ENCODE measurements at regions of chr1 and their contacts with region 1.

Region 1: DNA sequence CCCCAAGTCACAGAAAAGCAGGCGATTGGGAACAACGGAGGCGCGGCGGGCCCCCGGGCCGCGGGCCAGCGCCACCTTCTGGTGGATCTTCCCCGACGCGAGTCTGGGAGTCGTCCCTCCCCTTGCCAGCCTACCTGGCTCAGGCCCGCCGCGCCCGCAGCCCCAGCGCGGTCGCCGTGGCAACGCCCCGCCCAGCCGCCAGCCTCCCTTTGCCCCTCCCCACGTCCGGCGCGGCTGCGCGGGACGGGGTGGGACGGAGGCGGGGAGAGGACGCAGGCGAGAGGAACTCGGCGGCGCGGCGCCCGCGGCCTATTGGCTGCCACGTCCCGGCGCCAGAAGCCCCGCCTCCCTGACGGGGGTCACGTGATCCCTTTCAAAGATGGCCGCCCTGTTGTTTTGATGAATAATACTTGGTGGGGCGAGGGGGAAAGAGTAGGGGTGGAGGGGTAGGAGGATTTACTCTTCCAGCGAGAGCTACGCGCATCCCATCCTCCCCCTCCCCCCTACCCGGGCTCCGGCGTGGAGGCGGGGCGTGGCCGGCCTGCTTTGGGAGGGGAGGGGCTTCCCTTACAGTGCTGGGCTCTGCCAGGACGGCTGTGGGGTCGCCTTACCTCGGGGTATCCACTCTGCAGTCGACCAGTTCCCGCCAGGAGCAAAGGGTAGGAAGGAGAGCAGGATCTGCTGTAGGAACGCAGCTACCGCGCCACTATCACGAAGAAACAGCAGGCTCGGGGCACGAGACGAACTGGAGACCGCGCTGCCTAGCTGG is at the start of gene UBE4B:
- DNase-seq: peak; percentile 85
- H3K4me3 ChIP-seq: peak within 1 kb of the TSS; percentile 87
- H3K27me3 ChIP-seq: no peaks in the 10 kb centered on the region
- CTCF ChIP-seq: peak; percentile 84
- polyA plus RNA-seq, gene UBE4B: 18.2 and 19.4 TPM in 2 replicates

Region 2: DNA sequence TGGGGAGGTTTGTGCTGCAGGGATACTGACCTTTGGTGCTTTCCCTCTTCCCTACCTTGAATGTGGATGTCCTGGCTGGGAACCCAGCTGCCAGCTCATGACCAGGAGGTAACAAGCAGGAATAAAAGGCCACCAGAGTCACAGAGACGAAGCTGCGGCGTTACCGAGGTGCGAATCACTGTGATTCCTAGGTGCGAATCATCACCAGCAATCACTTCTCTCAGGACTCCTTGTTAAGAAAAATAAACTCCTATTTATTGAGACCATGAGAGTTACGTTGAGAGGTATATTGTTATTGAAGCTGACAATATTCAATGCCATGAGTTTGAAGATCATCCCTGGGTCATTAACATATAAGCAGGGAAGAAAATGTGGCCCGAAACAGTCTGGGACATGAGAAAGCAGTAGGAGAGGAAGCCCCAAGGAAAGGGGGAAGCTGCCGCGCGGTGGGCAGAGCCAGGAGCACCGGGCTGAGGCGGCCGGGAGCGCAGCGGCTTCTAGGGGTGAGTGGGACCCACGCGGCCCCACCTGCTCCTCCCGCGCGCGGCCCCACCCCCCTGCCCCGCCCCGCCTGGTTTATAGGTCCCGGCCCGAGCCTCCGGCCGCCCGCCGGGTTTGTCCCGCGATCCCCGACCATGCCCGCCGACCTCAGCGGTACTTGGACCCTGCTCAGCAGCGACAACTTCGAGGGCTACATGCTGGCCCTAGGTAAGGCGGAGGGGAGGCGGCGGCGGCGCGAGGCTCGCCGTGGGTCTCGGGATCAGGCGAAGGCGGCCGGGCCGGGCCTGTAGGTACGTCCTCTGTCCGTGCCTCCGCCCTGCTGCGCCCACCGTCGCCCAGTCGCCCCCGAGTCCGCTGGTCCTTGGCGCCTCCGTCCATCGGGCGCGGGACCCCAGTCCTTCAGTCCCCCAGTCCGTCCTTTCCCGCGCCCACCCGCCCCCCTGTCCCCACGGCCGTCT is 35.9 kb before region 1 on chr1 and contains the start of gene RBP7:
- CTCF ChIA-PET with region 1: no interaction called
- POLR2A ChIA-PET with region 1: no interaction called
- DNase-seq: no peak
- H3K4me3 ChIP-seq: peak within 1 kb of the TSS; percentile 29
- H3K27me3 ChIP-seq: peaks cover 8% of the 10 kb centered on the region
- CTCF ChIP-seq: no peak
- polyA plus RNA-seq, gene RBP7: 0.42 and 0.50 TPM in 2 replicates

Region 3: DNA sequence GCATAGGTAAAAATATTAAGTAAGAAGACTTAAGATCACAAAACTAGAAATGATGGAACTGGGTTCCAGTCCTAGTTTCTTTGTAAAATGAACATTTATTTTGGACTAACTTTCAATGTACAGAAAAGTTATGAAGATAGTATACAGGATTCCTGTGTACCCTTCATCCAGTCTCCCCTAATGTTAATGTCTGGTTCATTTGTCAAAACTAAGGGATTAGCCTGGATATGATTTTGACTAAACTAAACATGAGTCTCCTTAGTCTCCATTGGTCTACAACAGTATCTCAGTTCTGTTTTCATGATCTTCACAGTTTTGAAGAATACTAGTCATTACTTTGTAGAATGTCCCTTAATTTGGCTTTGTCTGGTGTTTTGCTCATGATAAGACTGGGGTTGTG is 54.4 kb after region 1 on chr1:
- CTCF ChIA-PET with region 1: no interaction called
- POLR2A ChIA-PET with region 1: no interaction called
- DNase-seq: no peak
- H3K4me3 ChIP-seq: no peak overlapping the region
- H3K27me3 ChIP-seq: no peaks in the 10 kb centered on the region
- CTCF ChIP-seq: no peak

Region 4: DNA sequence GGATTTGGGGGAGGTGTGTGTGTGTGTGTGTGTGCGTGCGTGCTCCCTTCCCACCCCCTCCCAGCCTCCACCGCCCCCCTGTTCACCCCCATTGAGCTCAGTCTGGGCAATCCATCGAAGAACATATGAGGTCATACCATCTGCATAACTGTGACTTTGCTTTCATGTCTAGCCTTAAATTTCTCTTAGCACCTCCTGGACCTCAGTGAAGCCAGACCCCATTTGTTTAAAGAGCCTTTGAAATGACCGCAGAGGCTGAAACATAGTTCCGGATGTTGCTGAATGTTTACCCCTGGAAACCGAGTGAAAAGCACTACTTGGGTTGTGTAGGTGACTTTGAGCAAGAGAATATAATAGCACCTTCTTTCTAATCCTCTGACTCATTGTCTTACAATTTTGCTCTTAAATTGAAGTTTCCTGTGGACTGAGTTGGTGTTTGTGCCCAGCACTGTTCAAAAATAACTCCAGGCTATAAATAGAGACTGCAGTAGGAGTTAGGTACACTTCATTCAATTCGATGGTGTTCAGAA is 75.4 kb after region 1 on chr1:
- CTCF ChIA-PET with region 1: no interaction called
- POLR2A ChIA-PET with region 1: interaction called, 13 read pairs
- DNase-seq: peak; percentile 53
- H3K4me3 ChIP-seq: no peak overlapping the region
- H3K27me3 ChIP-seq: no peaks in the 10 kb centered on the region
- CTCF ChIP-seq: no peak

Region 5: DNA sequence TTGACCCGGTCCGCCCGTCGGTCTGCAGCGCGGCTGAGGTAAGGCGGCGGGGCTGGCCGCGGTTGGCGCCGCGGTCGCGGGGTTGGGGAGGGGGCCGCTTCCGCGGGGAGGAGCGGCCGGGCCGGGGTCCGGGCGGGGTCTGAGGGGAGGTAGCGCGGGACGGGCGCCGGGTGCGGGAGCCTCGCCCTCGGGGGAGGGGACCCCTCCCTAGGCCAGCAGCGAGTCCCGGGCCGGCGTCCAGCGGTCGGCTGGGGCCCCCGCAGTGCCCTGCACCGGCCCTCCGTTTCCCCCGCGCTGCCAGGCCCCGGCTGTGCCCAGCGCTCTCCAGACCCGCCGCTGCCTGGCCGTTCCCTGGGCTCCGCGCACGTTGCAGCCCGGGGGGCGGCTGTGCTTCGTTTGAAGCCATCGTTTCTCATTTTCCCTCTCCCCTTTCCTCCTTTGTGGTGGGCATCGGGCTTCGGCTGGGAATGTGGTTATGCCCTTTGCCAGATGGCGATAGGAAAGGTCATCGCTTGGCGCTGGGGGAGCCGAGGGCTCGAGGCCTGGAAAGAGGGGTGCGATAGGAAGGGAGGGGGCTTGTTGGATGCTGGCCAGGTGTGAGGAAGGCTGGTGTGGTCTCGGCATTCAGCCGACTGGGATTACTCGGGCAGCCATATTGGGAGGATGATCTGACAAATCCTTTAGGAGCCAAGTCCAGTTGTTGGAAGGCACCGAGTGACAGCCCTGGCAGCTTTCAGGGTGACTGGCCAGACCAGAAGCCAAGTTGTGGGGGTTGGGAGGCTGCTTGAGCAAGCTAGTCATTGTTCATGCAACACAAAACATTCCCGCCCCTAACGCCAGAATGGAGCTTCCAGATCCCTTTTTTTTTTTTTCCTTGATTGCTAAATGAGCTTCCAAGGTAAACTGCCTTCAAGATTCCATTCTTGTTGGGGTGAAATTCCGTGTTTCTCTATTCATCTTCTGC is 178.3 kb after region 1 on chr1:
- CTCF ChIA-PET with region 1: no interaction called
- POLR2A ChIA-PET with region 1: no interaction called
- DNase-seq: peak; percentile 71
- H3K4me3 ChIP-seq: peak overlapping the region; percentile 76
- H3K27me3 ChIP-seq: no peaks in the 10 kb centered on the region
- CTCF ChIP-seq: no peak